ENCODE measurements at regions of chr13 and their contacts with region 1.

Region 1: DNA sequence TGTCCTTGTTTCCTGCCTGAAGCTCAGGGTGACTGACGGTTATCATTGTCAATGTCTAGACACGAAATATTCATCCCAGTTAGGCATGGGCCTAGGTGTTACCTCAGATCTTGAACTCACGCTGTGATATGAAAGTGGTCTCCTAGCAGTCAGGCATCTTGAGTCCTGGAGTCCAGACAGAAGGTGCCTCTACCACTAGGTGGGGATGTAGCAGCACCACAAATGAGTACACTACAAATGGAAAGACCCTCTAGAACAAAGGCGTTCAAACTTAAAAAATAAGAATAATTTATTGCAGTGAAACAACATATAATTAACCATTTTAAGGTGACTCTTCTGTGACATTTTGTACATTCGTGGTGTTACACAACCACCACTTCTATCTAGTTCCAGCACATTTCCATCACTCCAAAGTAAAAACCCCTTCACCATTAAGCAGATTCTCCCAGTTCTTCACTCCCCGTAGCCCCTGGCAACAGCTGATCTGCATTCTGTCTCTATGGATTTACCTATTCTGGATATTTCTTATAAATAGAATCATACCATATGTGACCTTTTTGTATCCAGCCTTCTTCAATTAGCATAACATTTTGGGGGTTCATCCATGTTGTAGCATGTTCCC is 11.9 kb upstream of the FRY start:
- DNase-seq: peak; percentile 58
- H3K4me3 ChIP-seq: no peak overlapping the region
- H3K27ac ChIP-seq: no peak overlapping the region
- H3K4me1 ChIP-seq: no peaks in the 10 kb centered on the region
- CTCF ChIP-seq: peak; percentile 88

Region 2: GRCh38 chr13:32310134-32310706 is 290.5 kb after region 1 on chr13:
- CTCF ChIA-PET with region 1: no interaction called
- POLR2A ChIA-PET with region 1: no interaction called
- intact Hi-C with region 1: loop called (anchors 1 kb)
- DNase-seq: peak; percentile 67
- H3K4me3 ChIP-seq: no peak overlapping the region
- H3K27ac ChIP-seq: no peak overlapping the region
- H3K4me1 ChIP-seq: peaks cover 24% of the 10 kb centered on the region
- CTCF ChIP-seq: peak; percentile 88

Region 3: DNA sequence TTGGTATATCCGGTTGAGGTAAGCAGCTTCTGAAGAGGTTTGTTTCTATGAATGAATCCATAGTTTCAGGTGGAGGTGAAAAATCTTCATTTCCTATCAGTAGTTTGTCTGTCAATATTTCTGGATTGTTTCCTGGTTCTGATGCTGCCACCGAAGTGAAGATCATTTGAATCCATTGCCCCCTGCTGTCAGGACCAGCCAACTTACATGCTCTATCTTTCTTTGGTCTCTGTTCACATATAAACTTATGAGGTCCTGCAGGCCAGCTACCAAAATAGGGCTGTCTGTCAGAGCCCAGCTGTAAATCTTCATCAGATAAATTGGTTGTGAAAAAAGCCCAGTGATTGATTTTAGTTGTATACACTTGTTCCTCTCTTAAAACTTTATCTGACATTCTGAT is 423.4 kb after region 1 on chr13:
- CTCF ChIA-PET with region 1: no interaction called
- POLR2A ChIA-PET with region 1: no interaction called
- intact Hi-C with region 1: loop called (anchors 5 kb)
- DNase-seq: peak; percentile 53
- H3K4me3 ChIP-seq: no peak overlapping the region
- H3K27ac ChIP-seq: no peak overlapping the region
- H3K4me1 ChIP-seq: no peaks in the 10 kb centered on the region
- CTCF ChIP-seq: peak; percentile 77

Region 4: GRCh38 chr13:32581177-32581786 is 561.6 kb after region 1 on chr13:
- CTCF ChIA-PET with region 1: no interaction called
- POLR2A ChIA-PET with region 1: no interaction called
- intact Hi-C with region 1: loop called (anchors 2 kb)
- DNase-seq: peak; percentile 52
- H3K4me3 ChIP-seq: no peak overlapping the region
- H3K27ac ChIP-seq: no peak overlapping the region
- H3K4me1 ChIP-seq: peaks cover 8% of the 10 kb centered on the region
- CTCF ChIP-seq: peak; percentile 91